ENCODE measurements at regions of chr16 and their contacts with region 1.

Region 1: GRCh38 chr16:47008174-47008573 is 34.7 kb upstream of the DNAJA2 start:
- DNase-seq: no peak
- ATAC-seq: no peak
- H3K4me3 ChIP-seq: no peak overlapping the region
- H3K27ac ChIP-seq: no peak overlapping the region
- H3K4me1 ChIP-seq: no peaks in the 10 kb centered on the region
- H3K27me3 ChIP-seq: no peaks in the 10 kb centered on the region
- CTCF ChIP-seq: no peak

Region 2: DNA sequence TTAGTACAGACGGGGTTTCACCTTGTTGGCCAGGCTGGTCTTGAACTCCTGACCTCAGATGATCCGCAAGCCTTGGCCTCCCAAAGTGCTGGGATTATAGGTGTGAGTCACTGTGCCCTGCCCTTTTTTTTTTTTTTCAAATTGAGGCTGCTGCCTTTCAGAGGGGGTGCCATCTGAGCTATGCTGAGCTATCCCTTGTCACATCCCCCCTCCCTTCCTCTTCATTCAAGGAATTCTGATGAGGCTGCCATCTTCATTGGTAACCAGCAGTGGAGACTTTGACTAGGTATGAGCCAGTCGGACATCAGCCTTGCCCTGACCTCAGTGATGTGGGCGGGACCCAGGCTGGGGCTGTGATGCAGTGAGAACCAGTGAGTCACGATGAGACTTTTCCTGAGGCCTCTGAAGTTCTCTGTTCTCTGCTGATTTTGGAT is 148.4 kb before region 1 on chr16:
- CTCF ChIA-PET with region 1: no interaction called
- POLR2A ChIA-PET with region 1: no interaction called
- in situ Hi-C with region 1: no loop called
- intact Hi-C with region 1: no loop called
- DNase-seq: peak; percentile 61
- ATAC-seq: peak; percentile 81; the same call in 1 of the 2 replicates
- H3K4me3 ChIP-seq: no peak overlapping the region
- H3K27ac ChIP-seq: no peak overlapping the region
- H3K4me1 ChIP-seq: no peaks in the 10 kb centered on the region
- H3K27me3 ChIP-seq: no peaks in the 10 kb centered on the region
- CTCF ChIP-seq: no peak

Region 3: GRCh38 chr16:46961373-46962353 is 46.5 kb before region 1 on chr16:
- CTCF ChIA-PET with region 1: no interaction called
- POLR2A ChIA-PET with region 1: no interaction called
- in situ Hi-C with region 1: no loop called
- intact Hi-C with region 1: no loop called
- DNase-seq: no peak
- ATAC-seq: no peak
- H3K4me3 ChIP-seq: no peak overlapping the region
- H3K27ac ChIP-seq: no peak overlapping the region
- H3K4me1 ChIP-seq: no peaks in the 10 kb centered on the region
- H3K27me3 ChIP-seq: no peaks in the 10 kb centered on the region
- CTCF ChIP-seq: no peak

Region 4: GRCh38 chr16:47065766-47066688 is 57.9 kb after region 1 on chr16:
- CTCF ChIA-PET with region 1: no interaction called
- POLR2A ChIA-PET with region 1: interaction called, 12 read pairs
- in situ Hi-C with region 1: no loop called
- intact Hi-C with region 1: no loop called
- DNase-seq: no peak
- ATAC-seq: no peak
- H3K4me3 ChIP-seq: no peak overlapping the region
- H3K27ac ChIP-seq: no peak overlapping the region
- H3K4me1 ChIP-seq: no peaks in the 10 kb centered on the region
- H3K27me3 ChIP-seq: no peaks in the 10 kb centered on the region
- CTCF ChIP-seq: no peak

Region 5: GRCh38 chr16:47236716-47237115 is 228.5 kb after region 1 on chr16:
- CTCF ChIA-PET with region 1: no interaction called
- POLR2A ChIA-PET with region 1: interaction called, 10 read pairs
- in situ Hi-C with region 1: no loop called
- intact Hi-C with region 1: no loop called
- DNase-seq: no peak
- ATAC-seq: no peak
- H3K4me3 ChIP-seq: no peak overlapping the region
- H3K27ac ChIP-seq: no peak overlapping the region
- H3K4me1 ChIP-seq: no peaks in the 10 kb centered on the region
- H3K27me3 ChIP-seq: no peaks in the 10 kb centered on the region
- CTCF ChIP-seq: no peak

Region 6: DNA sequence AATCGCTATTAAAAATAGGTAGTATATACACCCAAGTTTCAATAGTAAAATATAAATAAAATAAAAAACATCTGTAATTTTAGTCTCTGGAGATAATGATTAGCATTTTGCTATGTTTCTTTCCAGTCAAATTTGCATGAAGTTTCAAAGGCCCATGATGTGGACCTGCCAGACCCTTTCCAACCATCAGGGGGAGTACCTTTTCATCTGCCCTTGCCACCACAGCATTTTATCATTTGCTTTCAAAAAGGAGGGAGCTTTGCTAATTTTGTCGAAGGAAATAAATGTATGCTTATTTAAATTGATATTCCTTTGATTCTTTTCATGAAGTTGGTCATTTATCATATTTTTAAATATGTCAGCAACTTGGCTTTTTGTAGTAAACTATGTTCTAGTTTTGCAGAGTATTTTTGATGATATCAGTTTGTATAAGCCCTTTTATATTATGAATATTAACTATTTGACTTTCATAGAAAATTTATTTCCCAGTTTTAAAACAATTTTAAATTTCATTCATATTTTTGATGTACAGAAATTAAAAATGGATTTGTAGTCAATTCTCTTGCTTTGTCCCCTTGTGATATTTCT is 250.8 kb after region 1 on chr16:
- CTCF ChIA-PET with region 1: no interaction called
- POLR2A ChIA-PET with region 1: no interaction called
- in situ Hi-C with region 1: no loop called
- intact Hi-C with region 1: no loop called
- DNase-seq: peak; percentile 15
- ATAC-seq: no peak
- H3K4me3 ChIP-seq: no peak overlapping the region
- H3K27ac ChIP-seq: no peak overlapping the region
- H3K4me1 ChIP-seq: no peaks in the 10 kb centered on the region
- H3K27me3 ChIP-seq: no peaks in the 10 kb centered on the region
- CTCF ChIP-seq: peak; percentile 70; the same call in 1 of the 2 replicates